Mammary epithelial cell (primary cell): ENCODE measurements at regions of chr9 and their contacts with region 1.

Region 1: GRCh38 chr9:109022873-109023272 is 9.6 kb upstream of the CTNNAL1 start:
- DNase-seq: no peak
- H3K4me3 ChIP-seq: no peak overlapping the region
- H3K27ac ChIP-seq: no peak overlapping the region
- H3K4me1 ChIP-seq: peaks cover 12% of the 10 kb centered on the region
- H3K27me3 ChIP-seq: no peaks in the 10 kb centered on the region
- CTCF ChIP-seq: no peak

Region 2: DNA sequence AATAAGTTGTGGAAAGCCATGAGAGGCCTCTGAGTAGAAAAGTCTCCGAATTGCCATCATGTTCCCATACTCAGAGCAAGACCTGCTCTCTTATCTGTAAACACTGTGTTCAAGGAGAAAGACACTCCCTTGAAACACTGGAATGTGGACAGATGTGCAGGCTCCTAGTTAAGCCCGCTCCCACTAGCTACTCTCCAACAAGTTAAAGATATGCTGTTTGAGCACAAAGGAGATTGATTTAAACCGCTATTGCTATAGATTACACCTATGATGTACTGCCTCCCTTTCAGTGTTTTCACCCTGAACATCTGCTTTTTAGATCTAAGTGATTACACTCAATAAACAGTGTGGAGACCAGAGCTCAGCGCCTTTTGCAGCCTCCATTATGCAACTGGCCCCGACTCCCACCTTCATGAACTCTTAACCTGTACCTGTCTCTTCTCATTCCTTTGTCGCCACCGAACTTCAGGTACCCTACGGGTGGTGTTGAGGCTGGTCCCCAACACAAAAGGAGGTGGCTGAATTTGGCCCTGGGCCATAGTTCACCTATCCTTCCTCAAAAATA is 49.3 kb after region 1 on chr9:
- CTCF ChIA-PET with region 1: no interaction called
- dilution Hi-C with region 1: no loop called
- in situ Hi-C with region 1: no loop called
- intact Hi-C with region 1: no loop called
- DNase-seq: no peak
- H3K4me3 ChIP-seq: no peak overlapping the region
- H3K27ac ChIP-seq: no peak overlapping the region
- H3K4me1 ChIP-seq: peaks cover under 1% of the 10 kb centered on the region
- H3K27me3 ChIP-seq: no peaks in the 10 kb centered on the region
- CTCF ChIP-seq: no peak

Region 3: GRCh38 chr9:109129470-109130197 is 106.8 kb after region 1 on chr9:
- CTCF ChIA-PET with region 1: no interaction called
- dilution Hi-C with region 1: loop called (anchors 5 kb)
- in situ Hi-C with region 1: no loop called
- intact Hi-C with region 1: no loop called
- DNase-seq: no peak
- H3K4me3 ChIP-seq: no peak overlapping the region
- H3K27ac ChIP-seq: no peak overlapping the region
- H3K4me1 ChIP-seq: no peaks in the 10 kb centered on the region
- H3K27me3 ChIP-seq: no peaks in the 10 kb centered on the region
- CTCF ChIP-seq: no peak

Region 4: GRCh38 chr9:109455861-109456260 is 433.0 kb after region 1 on chr9:
- CTCF ChIA-PET with region 1: no interaction called
- dilution Hi-C with region 1: no loop called
- in situ Hi-C with region 1: no loop called
- intact Hi-C with region 1: no loop called
- DNase-seq: no peak
- H3K4me3 ChIP-seq: no peak overlapping the region
- H3K27ac ChIP-seq: no peak overlapping the region
- H3K4me1 ChIP-seq: peaks cover 20% of the 10 kb centered on the region
- H3K27me3 ChIP-seq: no peaks in the 10 kb centered on the region
- CTCF ChIP-seq: no peak